CD8-positive, alpha-beta T cell (primary cell): ENCODE measurements at regions of chr18 and their contacts with region 1.

Region 1: DNA sequence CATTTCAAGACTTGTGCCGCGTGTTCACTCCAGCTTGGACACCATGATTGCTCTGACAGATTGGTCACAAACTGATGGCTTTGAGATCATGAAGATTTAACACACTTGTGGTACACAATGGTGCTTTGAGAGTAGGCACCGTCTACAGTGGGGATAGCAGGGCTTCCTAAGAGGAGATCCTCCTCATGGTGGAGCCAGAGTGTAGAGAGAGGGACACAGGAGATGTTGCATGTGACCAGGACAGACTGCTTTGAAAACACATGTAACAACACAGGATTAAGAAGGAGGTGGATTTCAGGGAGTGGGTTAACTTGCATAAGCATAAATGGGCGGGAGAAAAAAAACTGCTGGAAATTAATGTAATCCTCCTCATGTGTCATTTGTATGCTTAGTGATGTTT is 95.7 kb upstream of the LINC00305 start:
- DNase-seq: no peak
- ATAC-seq: no peak
- H3K4me3 ChIP-seq: no peak overlapping the region
- H3K4me3 Mint-ChIP-seq: no peak overlapping the region
- H3K27ac ChIP-seq: no peak overlapping the region
- H3K27ac Mint-ChIP-seq: no peak overlapping the region
- H3K4me1 ChIP-seq: no peaks in the 10 kb centered on the region
- H3K4me1 Mint-ChIP-seq: no peaks in the 10 kb centered on the region
- H3K27me3 ChIP-seq: no peaks in the 10 kb centered on the region
- H3K27me3 Mint-ChIP-seq: no peaks in the 10 kb centered on the region
- CTCF ChIP-seq: no peak

Region 2: DNA sequence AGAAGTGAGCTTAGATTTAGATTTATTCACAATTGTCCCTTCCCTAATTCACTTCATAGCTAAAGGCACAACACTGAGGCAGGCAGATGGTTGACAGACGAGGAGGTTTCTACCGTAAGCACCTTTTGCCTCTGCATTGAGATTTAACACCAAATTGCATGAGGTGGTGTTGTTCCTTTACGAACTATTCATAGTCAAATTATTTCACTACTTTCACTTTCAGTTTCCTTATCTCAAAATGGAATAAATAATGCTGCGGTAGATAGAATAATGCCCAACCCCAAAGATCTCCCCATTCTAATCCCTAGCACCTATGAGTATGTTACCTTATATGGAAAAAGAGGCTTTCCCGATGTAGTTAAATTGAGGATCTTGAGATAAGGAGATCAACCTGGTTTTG is 36.8 kb before region 1 on chr18:
- CTCF ChIA-PET with region 1: no interaction called
- POLR2A ChIA-PET with region 1: no interaction called
- intact Hi-C with region 1: no loop called
- DNase-seq: no peak
- ATAC-seq: no peak
- H3K4me3 ChIP-seq: peak overlapping the region; percentile 4 to 33
- H3K4me3 Mint-ChIP-seq: peak overlapping the region; percentile 58
- H3K27ac ChIP-seq: no peak overlapping the region
- H3K27ac Mint-ChIP-seq: no peak overlapping the region
- H3K4me1 ChIP-seq: no peaks in the 10 kb centered on the region
- H3K4me1 Mint-ChIP-seq: peaks cover 10% of the 10 kb centered on the region
- H3K27me3 ChIP-seq: no peaks in the 10 kb centered on the region
- H3K27me3 Mint-ChIP-seq: no peaks in the 10 kb centered on the region
- CTCF ChIP-seq: no peak

Region 3: GRCh38 chr18:64264171-64264570 is 19.6 kb after region 1 on chr18:
- CTCF ChIA-PET with region 1: no interaction called
- POLR2A ChIA-PET with region 1: no interaction called
- intact Hi-C with region 1: loop called in 1 of 2 experiments (anchors 2 kb)
- DNase-seq: no peak
- ATAC-seq: no peak
- H3K4me3 ChIP-seq: no peak overlapping the region
- H3K4me3 Mint-ChIP-seq: no peak overlapping the region
- H3K27ac ChIP-seq: no peak overlapping the region
- H3K27ac Mint-ChIP-seq: no peak overlapping the region
- H3K4me1 ChIP-seq: no peaks in the 10 kb centered on the region
- H3K4me1 Mint-ChIP-seq: no peaks in the 10 kb centered on the region
- H3K27me3 ChIP-seq: no peaks in the 10 kb centered on the region
- H3K27me3 Mint-ChIP-seq: no peaks in the 10 kb centered on the region
- CTCF ChIP-seq: no peak

Region 4: GRCh38 chr18:64695851-64696553 is 451.4 kb after region 1 on chr18:
- CTCF ChIA-PET with region 1: no interaction called
- POLR2A ChIA-PET with region 1: no interaction called
- intact Hi-C with region 1: no loop called
- DNase-seq: no peak
- ATAC-seq: no peak
- H3K4me3 ChIP-seq: no peak overlapping the region
- H3K4me3 Mint-ChIP-seq: no peak overlapping the region
- H3K27ac ChIP-seq: no peak overlapping the region
- H3K27ac Mint-ChIP-seq: no peak overlapping the region
- H3K4me1 ChIP-seq: no peaks in the 10 kb centered on the region
- H3K4me1 Mint-ChIP-seq: no peaks in the 10 kb centered on the region
- H3K27me3 ChIP-seq: no peaks in the 10 kb centered on the region
- H3K27me3 Mint-ChIP-seq: no peaks in the 10 kb centered on the region
- CTCF ChIP-seq: no peak